Endothelial cell of umbilical vein (primary cell): ENCODE measurements at regions of chr3 and their contacts with region 1.

Region 1: DNA sequence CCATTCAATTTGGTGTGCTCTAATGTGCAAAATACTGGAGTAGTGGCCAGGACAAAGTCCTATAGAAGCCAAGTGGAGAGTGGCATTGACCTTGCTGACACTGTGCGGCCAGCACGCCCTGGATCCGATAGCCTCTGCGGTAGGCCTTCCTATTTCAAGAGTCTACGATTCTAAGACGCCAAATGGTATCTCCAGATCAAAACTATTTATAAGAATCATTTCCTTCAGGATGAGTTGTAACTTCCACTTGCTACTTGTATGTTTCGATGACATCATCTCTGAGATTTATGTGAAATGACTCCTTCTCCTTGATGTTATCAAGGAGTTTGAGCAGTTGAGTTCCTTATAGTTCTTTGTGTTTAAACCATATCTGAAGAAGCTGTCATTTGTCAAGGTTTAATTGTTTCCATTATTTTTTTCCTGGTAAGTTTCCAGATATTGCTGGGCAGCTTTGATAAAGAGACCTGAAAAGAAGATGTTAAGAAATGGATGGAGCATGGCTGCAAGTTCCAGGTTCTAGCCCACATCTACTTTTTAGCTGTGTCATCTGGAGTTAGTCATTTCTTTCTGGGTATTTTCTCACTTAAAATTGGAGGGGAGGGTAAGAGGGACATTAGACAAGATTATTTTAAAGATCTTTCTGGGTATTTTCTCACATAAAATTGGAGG is 71.8 kb downstream of the TMEM44 start:
- DNase-seq: peak; percentile 90
- H3K4me3 ChIP-seq: no peak overlapping the region
- H3K27ac ChIP-seq: peak overlapping the region; percentile 78
- H3K4me1 ChIP-seq: peaks cover 21% of the 10 kb centered on the region
- H3K27me3 ChIP-seq: peaks cover 5 to 9% of the 10 kb centered on the region in 2 experiments
- CTCF ChIP-seq: no peak
- POLR2A ChIP-seq: no peak

Region 2: GRCh38 chr3:194508491-194509453 is 52.7 kb before region 1 on chr3:
- CTCF ChIA-PET with region 1: no interaction called
- POLR2A ChIA-PET with region 1: no interaction called
- dilution Hi-C with region 1: no loop called
- intact Hi-C with region 1: no loop called
- DNase-seq: no peak
- H3K4me3 ChIP-seq: no peak overlapping the region
- H3K27ac ChIP-seq: no peak overlapping the region
- H3K4me1 ChIP-seq: no peaks in the 10 kb centered on the region
- H3K27me3 ChIP-seq: no peaks in the 10 kb centered on the region
- CTCF ChIP-seq: no peak
- POLR2A ChIP-seq: no peak

Region 3: GRCh38 chr3:194573691-194574437 is 12.4 kb after region 1 on chr3:
- CTCF ChIA-PET with region 1: interaction called, 9 read pairs
- POLR2A ChIA-PET with region 1: interaction called, 4 read pairs
- dilution Hi-C with region 1: no loop called
- intact Hi-C with region 1: loop called (anchors 2 kb)
- DNase-seq: peak; percentile 54
- H3K4me3 ChIP-seq: no peak overlapping the region
- H3K27ac ChIP-seq: no peak overlapping the region
- H3K4me1 ChIP-seq: peaks cover 20% of the 10 kb centered on the region
- H3K27me3 ChIP-seq: no peaks in the 10 kb centered on the region
- CTCF ChIP-seq: peak; percentile 55 to 76
- POLR2A ChIP-seq: no peak

Region 4: GRCh38 chr3:194583604-194584318 is 22.3 kb after region 1 on chr3:
- CTCF ChIA-PET with region 1: interaction called, 3 read pairs
- POLR2A ChIA-PET with region 1: interaction called, 4 read pairs
- dilution Hi-C with region 1: no loop called
- intact Hi-C with region 1: loop called (anchors 2 kb)
- DNase-seq: peak; percentile 95
- H3K4me3 ChIP-seq: peak overlapping the region; percentile 27 to 91 (median 61)
- H3K27ac ChIP-seq: peak overlapping the region; percentile 80
- H3K4me1 ChIP-seq: peaks cover 49% of the 10 kb centered on the region
- H3K27me3 ChIP-seq: no peaks in the 10 kb centered on the region
- CTCF ChIP-seq: no peak
- POLR2A ChIP-seq: peak; percentile 94